Transverse colon (tissue), 4 donors: ENCODE measurements at regions of chr4 and their contacts with region 1.

Region 1: GRCh38 chr4:38675146-38676121 is 11.4 kb downstream of the KLF3 start:
- DNase-seq: peak; percentile 90
- H3K4me3 ChIP-seq: peak overlapping the region in 1 of 4 donors; percentile 11
- H3K27ac ChIP-seq: peak overlapping the region; percentile 100
- H3K4me1 ChIP-seq: peaks cover 52 to 95% (median 81%) of the 10 kb centered on the region in 4 donors
- H3K27me3 ChIP-seq: no peaks in the 10 kb centered on the region
- CTCF ChIP-seq: peak; percentile 85 to 98 (median 96)
- EP300 ChIP-seq: no peak
- POLR2A ChIP-seq: no peak

Region 2: DNA sequence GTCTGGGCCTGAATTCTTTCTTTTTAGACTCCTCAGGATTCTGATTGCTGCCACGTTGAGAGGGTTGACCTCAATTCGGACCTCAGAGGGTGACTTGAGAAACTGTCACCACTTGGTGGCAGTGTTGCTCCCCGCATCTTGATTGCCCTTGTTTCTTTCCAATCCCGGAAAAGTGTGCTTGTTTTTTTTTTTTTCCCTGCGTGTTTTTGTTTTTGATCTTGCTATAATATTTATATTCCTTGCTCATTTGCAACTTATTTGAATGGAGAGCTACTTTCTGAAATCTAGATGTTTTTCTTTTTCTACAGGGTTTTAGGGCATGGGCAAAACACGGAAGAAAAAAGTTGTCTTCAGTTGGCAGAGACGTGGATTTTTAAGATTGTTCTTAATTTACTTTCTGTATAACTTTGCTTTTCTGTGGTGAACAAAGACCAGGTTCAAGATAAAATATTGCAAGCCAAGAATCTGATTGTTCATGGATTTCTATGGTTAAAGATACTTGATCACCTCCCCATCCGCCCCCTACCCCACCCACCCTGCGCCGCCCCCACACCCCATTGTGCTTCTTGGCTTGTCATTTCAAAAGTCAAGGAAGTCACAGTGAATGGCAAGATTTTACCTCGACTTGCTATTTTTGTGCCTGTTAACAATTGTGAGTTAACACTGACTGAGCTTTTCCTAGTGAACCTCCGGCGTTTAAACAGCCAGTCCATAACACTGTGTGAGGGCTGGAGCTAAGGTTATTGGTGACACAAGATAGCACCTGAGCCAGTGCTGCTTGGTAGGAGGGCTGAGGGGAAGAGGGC is 613.1 kb before region 1 on chr4:
- in situ Hi-C with region 1: loop called in 1 of 4 experiments (anchors 5 kb)
- intact Hi-C with region 1: no loop called
- DNase-seq: peak; percentile 89
- H3K4me3 ChIP-seq: peak overlapping the region in 3 of 4 donors; percentile 12 to 46 (median 31)
- H3K27ac ChIP-seq: peak overlapping the region; percentile 72 to 80 (median 78)
- H3K4me1 ChIP-seq: peaks cover 0 to 26% (median 8%) of the 10 kb centered on the region in 4 donors
- H3K27me3 ChIP-seq: no peaks in the 10 kb centered on the region
- CTCF ChIP-seq: peak; percentile 82 to 91 (median 89)
- EP300 ChIP-seq: no peak
- POLR2A ChIP-seq: no peak

Region 3: GRCh38 chr4:38078590-38079421 is 596.6 kb before region 1 on chr4:
- in situ Hi-C with region 1: loop called in 1 of 4 experiments (anchors 10 kb)
- intact Hi-C with region 1: no loop called
- DNase-seq: peak; percentile 63
- H3K4me3 ChIP-seq: no peak overlapping the region
- H3K27ac ChIP-seq: peak overlapping the region; percentile 85 to 93 (median 88)
- H3K4me1 ChIP-seq: peaks cover 25 to 76% (median 48%) of the 10 kb centered on the region in 4 donors
- H3K27me3 ChIP-seq: no peaks in the 10 kb centered on the region
- CTCF ChIP-seq: no peak
- EP300 ChIP-seq: no peak
- POLR2A ChIP-seq: peak; percentile 64

Region 4: DNA sequence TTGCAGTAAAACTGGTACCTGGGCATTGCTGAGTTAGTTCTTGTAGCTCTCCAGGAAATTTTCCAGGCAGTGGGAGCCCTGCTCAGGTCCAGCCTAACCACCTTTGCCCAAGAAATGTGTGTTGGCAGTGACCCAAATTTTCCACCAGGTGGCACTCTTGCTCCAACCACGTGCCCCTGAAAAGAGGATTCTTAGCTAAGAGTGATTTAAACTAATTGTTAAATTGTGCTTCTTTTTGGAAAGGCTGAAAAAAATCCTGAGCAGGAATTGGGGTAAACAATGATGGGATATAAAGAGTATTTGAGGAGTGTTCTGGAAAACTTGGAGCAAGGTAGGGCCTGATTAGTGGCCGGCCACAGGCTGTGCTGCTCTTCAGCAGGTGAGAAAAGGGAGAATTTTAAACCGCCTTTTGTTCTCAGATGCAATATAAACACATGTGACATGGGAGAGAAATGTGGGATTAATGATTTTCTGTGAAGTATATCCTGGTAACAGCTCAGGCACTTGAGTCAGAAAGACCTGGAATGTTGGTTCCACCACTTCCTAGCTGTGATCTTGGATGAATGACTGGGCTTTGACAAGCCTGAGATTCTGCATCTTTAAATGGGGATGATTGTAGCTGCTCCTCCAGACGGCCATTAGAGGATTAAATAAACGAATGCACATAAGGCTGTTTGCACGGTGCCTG is 495.6 kb before region 1 on chr4:
- in situ Hi-C with region 1: loop called in 3 of 4 experiments (anchors 5 to 10 kb)
- intact Hi-C with region 1: no loop called
- DNase-seq: peak; percentile 88
- H3K4me3 ChIP-seq: no peak overlapping the region
- H3K27ac ChIP-seq: peak overlapping the region; percentile 36 to 65 (median 52)
- H3K4me1 ChIP-seq: peaks cover 5 to 32% (median 16%) of the 10 kb centered on the region in 4 donors
- H3K27me3 ChIP-seq: no peaks in the 10 kb centered on the region
- CTCF ChIP-seq: peak; percentile 90 to 97 (median 94)
- EP300 ChIP-seq: no peak
- POLR2A ChIP-seq: no peak

Region 5: DNA sequence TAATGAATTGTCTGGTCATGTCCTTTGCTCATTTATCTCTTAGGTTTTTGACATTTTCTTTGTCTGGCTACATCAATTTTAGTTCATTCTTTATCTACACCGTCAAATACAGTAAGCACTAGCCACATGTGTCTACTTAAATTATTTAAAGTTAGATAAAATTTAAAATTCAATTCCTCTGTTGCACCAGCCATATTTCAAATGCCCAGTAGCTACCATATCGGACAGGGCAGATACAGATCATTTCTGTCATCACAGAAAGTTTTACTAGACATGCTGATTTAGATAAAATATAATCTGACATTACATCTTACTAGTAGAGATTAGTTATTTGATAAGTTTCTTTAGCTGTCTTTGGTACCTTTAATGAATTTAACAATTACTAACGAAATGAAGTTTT is 568.0 kb after region 1 on chr4:
- in situ Hi-C with region 1: no loop called
- intact Hi-C with region 1: no loop called
- DNase-seq: no peak
- H3K4me3 ChIP-seq: no peak overlapping the region
- H3K27ac ChIP-seq: no peak overlapping the region
- H3K4me1 ChIP-seq: no peaks in the 10 kb centered on the region
- H3K27me3 ChIP-seq: no peaks in the 10 kb centered on the region
- CTCF ChIP-seq: no peak
- EP300 ChIP-seq: no peak
- POLR2A ChIP-seq: no peak